T-cell (primary cell): ENCODE measurements at regions of chr2 and their contacts with region 1.

Region 1: DNA sequence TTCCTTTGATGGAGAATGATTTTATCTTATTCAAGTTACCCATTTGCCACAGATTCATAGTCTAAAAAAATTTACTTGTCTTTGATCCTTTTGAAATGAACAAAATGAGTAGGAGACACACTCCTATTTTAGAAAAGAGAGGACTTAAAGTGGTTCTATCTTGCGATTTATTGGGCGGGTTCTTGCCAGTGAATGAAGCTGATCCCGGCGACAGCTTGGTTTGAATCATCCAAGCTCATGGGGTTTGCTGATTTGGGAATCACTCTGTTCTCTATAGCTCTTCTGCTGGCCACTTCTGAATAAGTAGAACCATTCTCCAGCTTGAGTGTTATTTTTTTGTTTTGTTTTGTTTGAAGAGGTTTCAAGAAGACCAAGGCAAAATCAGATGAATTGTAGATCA is 25.5 kb upstream of the PPP1CB start:
- DNase-seq: no peak
- ATAC-seq: no peak
- H3K4me3 ChIP-seq: no peak overlapping the region
- H3K4me3 Mint-ChIP-seq: no peak overlapping the region
- H3K27ac ChIP-seq: no peak overlapping the region
- H3K27ac Mint-ChIP-seq: no peak overlapping the region
- H3K4me1 ChIP-seq: no peaks in the 10 kb centered on the region
- H3K4me1 Mint-ChIP-seq: peaks cover 3 to 11% (median 10%) of the 10 kb centered on the region in 3 donors
- H3K27me3 ChIP-seq: no peaks in the 10 kb centered on the region
- H3K27me3 Mint-ChIP-seq: no peaks in the 10 kb centered on the region

Region 2: DNA sequence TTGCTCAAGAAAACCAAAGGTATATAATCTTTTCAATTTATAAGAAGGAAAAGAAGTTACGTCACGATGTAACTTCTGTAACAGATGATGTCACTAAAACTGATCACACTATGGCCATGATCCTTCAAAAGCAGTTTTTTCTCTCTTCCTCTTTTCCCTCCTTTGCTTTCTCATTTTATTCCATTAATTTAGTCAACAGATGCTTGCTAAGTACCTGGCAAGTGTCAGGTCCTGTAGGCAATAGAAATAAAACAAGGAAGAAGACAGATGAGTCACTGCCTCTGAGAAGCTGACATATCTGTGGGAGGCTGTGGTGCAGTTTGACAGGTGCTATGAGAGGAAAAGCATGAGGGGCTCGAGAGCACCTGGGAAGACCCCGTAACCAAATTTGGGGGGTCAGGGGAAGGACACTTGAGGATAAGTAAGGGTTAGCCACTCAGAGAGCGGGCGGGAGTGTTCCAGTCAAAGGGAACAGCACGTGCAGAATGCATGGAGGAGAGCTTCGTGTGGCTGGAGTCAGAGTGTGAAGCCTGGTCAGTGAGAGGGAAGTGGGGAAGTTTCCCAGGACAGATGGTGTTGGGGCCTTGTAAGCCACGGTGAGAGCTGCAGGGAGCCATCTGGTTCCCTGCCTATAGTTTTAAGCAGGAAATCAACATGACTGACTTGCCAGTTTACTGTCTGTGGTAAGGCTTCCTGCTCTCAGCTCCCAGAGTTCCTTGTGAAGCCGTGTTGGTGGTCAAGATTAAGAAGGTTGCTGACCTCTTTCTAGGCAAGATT is 532.4 kb before region 1 on chr2:
- CTCF ChIA-PET with region 1: no interaction called
- POLR2A ChIA-PET with region 1: interaction called in 1 of 2 experiments, 12 read pairs
- DNase-seq: no peak
- ATAC-seq: no peak
- H3K4me3 ChIP-seq: no peak overlapping the region
- H3K4me3 Mint-ChIP-seq: no peak overlapping the region
- H3K27ac ChIP-seq: no peak overlapping the region
- H3K27ac Mint-ChIP-seq: no peak overlapping the region
- H3K4me1 ChIP-seq: no peaks in the 10 kb centered on the region
- H3K4me1 Mint-ChIP-seq: peaks cover 0 to 6% (median 3%) of the 10 kb centered on the region in 3 donors
- H3K27me3 ChIP-seq: no peaks in the 10 kb centered on the region
- H3K27me3 Mint-ChIP-seq: no peaks in the 10 kb centered on the region

Region 3: GRCh38 chr2:28566521-28567041 is 159.6 kb before region 1 on chr2:
- CTCF ChIA-PET with region 1: no interaction called
- POLR2A ChIA-PET with region 1: interaction called in 1 of 2 experiments, 11 read pairs
- DNase-seq: peak; percentile 70 to 95 (median 87)
- ATAC-seq: peak; percentile 95 to 99 (median 96)
- H3K4me3 ChIP-seq: peak overlapping the region; percentile 67 to 90
- H3K4me3 Mint-ChIP-seq: peak overlapping the region; percentile 86 to 89 (median 87)
- H3K27ac ChIP-seq: no peak overlapping the region
- H3K27ac Mint-ChIP-seq: peak overlapping the region; percentile 67 to 89
- H3K4me1 ChIP-seq: peaks cover 8 to 18% of the 10 kb centered on the region in 2 experiments
- H3K4me1 Mint-ChIP-seq: peaks cover 9 to 19% (median 16%) of the 10 kb centered on the region in 3 donors
- H3K27me3 ChIP-seq: peaks cover 0 to 3% of the 10 kb centered on the region in 2 experiments
- H3K27me3 Mint-ChIP-seq: no peaks in the 10 kb centered on the region

Region 4: GRCh38 chr2:28745225-28745624 is 19.0 kb after region 1 on chr2:
- CTCF ChIA-PET with region 1: interaction called in 1 of 2 experiments, 3 read pairs
- POLR2A ChIA-PET with region 1: interaction called in 1 of 2 experiments, 12 read pairs
- DNase-seq: no peak
- ATAC-seq: no peak
- H3K4me3 ChIP-seq: no peak overlapping the region
- H3K4me3 Mint-ChIP-seq: no peak overlapping the region
- H3K27ac ChIP-seq: no peak overlapping the region
- H3K27ac Mint-ChIP-seq: no peak overlapping the region
- H3K4me1 ChIP-seq: peaks cover 10 to 15% of the 10 kb centered on the region in 2 experiments
- H3K4me1 Mint-ChIP-seq: peaks cover 29 to 34% (median 31%) of the 10 kb centered on the region in 3 donors
- H3K27me3 ChIP-seq: no peaks in the 10 kb centered on the region
- H3K27me3 Mint-ChIP-seq: peaks cover 2 to 3% of the 10 kb centered on the region in 2 donors